ENCODE measurements at regions of chr6 and their contacts with region 1.

Region 1: GRCh38 chr6:36302227-36302976 is 32.5 kb downstream of the PNPLA1 start:
- DNase-seq: peak; percentile 92
- H3K4me3 Mint-ChIP-seq: no peak overlapping the region
- H3K27ac Mint-ChIP-seq: no peak overlapping the region
- H3K4me1 Mint-ChIP-seq: no peaks in the 10 kb centered on the region
- H3K27me3 Mint-ChIP-seq: peaks cover 16% of the 10 kb centered on the region

Region 2: GRCh38 chr6:36289281-36289878 is 13.0 kb before region 1 on chr6:
- CTCF ChIA-PET with region 1: interaction called, 11 read pairs
- POLR2A ChIA-PET with region 1: no interaction called
- DNase-seq: no peak
- H3K4me3 Mint-ChIP-seq: no peak overlapping the region
- H3K27ac Mint-ChIP-seq: no peak overlapping the region
- H3K4me1 Mint-ChIP-seq: peaks cover 9% of the 10 kb centered on the region
- H3K27me3 Mint-ChIP-seq: peaks cover 19% of the 10 kb centered on the region

Region 3: GRCh38 chr6:36318690-36319435 is 16.5 kb after region 1 on chr6:
- CTCF ChIA-PET with region 1: interaction called, 10 read pairs
- POLR2A ChIA-PET with region 1: no interaction called
- DNase-seq: no peak
- H3K4me3 Mint-ChIP-seq: no peak overlapping the region
- H3K27ac Mint-ChIP-seq: no peak overlapping the region
- H3K4me1 Mint-ChIP-seq: no peaks in the 10 kb centered on the region
- H3K27me3 Mint-ChIP-seq: peaks cover 8% of the 10 kb centered on the region

Region 4: GRCh38 chr6:36360241-36361054 is 58.0 kb after region 1 on chr6:
- CTCF ChIA-PET with region 1: interaction called, 13 read pairs
- POLR2A ChIA-PET with region 1: no interaction called
- DNase-seq: peak; percentile 77
- H3K4me3 Mint-ChIP-seq: no peak overlapping the region
- H3K27ac Mint-ChIP-seq: no peak overlapping the region
- H3K4me1 Mint-ChIP-seq: peaks cover 27% of the 10 kb centered on the region
- H3K27me3 Mint-ChIP-seq: peaks cover 6% of the 10 kb centered on the region

Measured in activated CD4-positive, alpha-beta memory T cell treated with anti-CD3 and anti-CD28 coated beads, Interleukin-2, amount 10 ng/mL, durations not matched to agents 7 days and 5 days (primary cell).